CD4-positive, alpha-beta T cell (primary cell): ENCODE measurements at regions of chr14 and their contacts with region 1.

Region 1: GRCh38 chr14:52769887-52770286 is 21.5 kb downstream of the GNPNAT1 start:
- DNase-seq: no peak
- ATAC-seq: no peak
- H3K4me3 ChIP-seq: no peak overlapping the region
- H3K4me3 Mint-ChIP-seq: no peak overlapping the region
- H3K27ac ChIP-seq: no peak overlapping the region
- H3K27ac Mint-ChIP-seq: no peak overlapping the region
- H3K4me1 ChIP-seq: no peaks in the 10 kb centered on the region
- H3K4me1 Mint-ChIP-seq: peaks cover 9% of the 10 kb centered on the region
- H3K27me3 ChIP-seq: no peaks in the 10 kb centered on the region
- H3K27me3 Mint-ChIP-seq: no peaks in the 10 kb centered on the region
- CTCF ChIP-seq: no peak

Region 2: DNA sequence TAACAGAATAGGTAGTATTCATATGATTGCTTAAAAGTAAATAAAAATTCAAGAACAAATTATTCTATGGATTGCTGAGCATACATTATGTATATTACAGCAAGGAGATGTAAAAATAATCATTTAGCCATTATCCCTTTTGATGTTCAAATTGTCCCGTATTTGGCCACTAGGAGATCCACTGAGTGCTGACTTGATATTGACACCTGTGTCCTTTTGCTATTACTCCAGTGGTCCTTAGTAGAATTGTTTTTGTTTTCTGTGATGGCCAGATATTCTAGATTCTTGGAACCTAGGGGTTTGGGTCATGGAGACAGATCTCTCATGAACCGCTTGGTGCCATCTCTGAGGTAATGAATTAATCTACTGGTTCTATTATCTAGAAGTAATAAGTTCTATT is 91.3 kb before region 1 on chr14:
- CTCF ChIA-PET with region 1: no interaction called
- POLR2A ChIA-PET with region 1: no interaction called
- intact Hi-C with region 1: loop called in 1 of 2 experiments (anchors 5 kb)
- DNase-seq: peak in 3 of 14 experiments; percentile 34 to 57 (median 50)
- ATAC-seq: peak; percentile 63
- H3K4me3 ChIP-seq: no peak overlapping the region
- H3K4me3 Mint-ChIP-seq: no peak overlapping the region
- H3K27ac ChIP-seq: no peak overlapping the region
- H3K27ac Mint-ChIP-seq: no peak overlapping the region
- H3K4me1 ChIP-seq: peaks cover 2% of the 10 kb centered on the region
- H3K4me1 Mint-ChIP-seq: peaks cover 10% of the 10 kb centered on the region
- H3K27me3 ChIP-seq: no peaks in the 10 kb centered on the region
- H3K27me3 Mint-ChIP-seq: no peaks in the 10 kb centered on the region
- CTCF ChIP-seq: peak; percentile 51

Region 3: DNA sequence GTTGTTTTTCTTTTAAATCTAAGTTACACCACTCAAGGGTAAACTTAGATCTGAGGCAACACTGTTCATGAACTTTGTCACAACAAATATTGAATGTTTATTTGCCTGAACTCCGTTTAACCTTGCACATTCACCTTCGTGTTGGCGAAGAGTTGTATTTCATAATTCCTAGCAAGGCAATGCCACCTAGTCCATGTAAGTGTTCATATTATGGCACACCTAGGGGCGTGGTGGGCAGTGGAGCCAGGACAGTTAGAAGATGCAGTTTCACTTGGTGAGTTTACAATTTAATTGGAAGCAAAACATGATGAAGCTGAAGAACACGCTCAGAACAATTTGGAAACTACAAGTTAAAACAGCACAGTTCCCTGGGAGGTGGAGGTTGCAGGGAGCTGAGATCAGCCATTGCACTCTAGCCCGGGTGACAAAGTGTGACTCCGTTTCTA is 51.9 kb after region 1 on chr14:
- CTCF ChIA-PET with region 1: no interaction called
- POLR2A ChIA-PET with region 1: no interaction called
- intact Hi-C with region 1: no loop called
- DNase-seq: no peak
- ATAC-seq: no peak
- H3K4me3 ChIP-seq: no peak overlapping the region
- H3K4me3 Mint-ChIP-seq: no peak overlapping the region
- H3K27ac ChIP-seq: no peak overlapping the region
- H3K27ac Mint-ChIP-seq: no peak overlapping the region
- H3K4me1 ChIP-seq: no peaks in the 10 kb centered on the region
- H3K4me1 Mint-ChIP-seq: no peaks in the 10 kb centered on the region
- H3K27me3 ChIP-seq: no peaks in the 10 kb centered on the region
- H3K27me3 Mint-ChIP-seq: peaks cover 5% of the 10 kb centered on the region
- CTCF ChIP-seq: no peak

Region 4: GRCh38 chr14:53570411-53571387 is 800.8 kb after region 1 on chr14:
- CTCF ChIA-PET with region 1: no interaction called
- POLR2A ChIA-PET with region 1: no interaction called
- intact Hi-C with region 1: no loop called
- DNase-seq: no peak
- ATAC-seq: no peak
- H3K4me3 ChIP-seq: no peak overlapping the region
- H3K4me3 Mint-ChIP-seq: no peak overlapping the region
- H3K27ac ChIP-seq: no peak overlapping the region
- H3K27ac Mint-ChIP-seq: no peak overlapping the region
- H3K4me1 ChIP-seq: no peaks in the 10 kb centered on the region
- H3K4me1 Mint-ChIP-seq: no peaks in the 10 kb centered on the region
- H3K27me3 ChIP-seq: no peaks in the 10 kb centered on the region
- H3K27me3 Mint-ChIP-seq: peaks cover 14% of the 10 kb centered on the region
- CTCF ChIP-seq: no peak